ENCODE measurements at regions of chr17 and their contacts with region 1.

Region 1: DNA sequence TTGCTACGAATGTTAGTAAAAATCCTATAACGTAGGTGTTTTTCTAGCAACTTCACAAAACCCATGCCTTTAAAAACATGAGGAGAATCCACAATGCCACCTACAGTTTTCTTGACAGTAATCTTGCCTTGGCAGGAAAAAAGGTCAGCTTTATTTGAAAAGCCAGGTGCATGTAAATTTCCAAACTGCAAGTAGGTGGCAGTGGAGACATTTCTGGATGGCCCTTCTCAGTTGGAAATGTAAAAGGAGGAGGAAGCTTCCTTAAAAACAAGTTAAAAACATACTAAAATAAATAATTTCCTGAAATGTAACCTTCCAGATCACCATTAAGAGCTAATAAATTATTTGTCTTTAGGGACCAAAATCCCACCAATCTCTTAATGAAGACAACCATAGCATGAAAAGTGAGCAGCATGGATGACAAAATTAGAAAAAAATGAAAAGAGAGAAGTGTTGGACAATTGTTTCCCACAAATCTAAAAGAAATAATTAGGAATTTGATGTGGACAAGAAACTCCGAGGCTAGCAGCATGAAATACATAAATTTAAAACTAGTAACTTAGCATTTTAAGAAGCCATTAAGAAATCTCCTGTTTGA is 152.2 kb downstream of the SNX11 start:
- DNase-seq: peak; percentile 35 to 87
- ATAC-seq: peak; percentile 52 to 59; a peak in 4 of 6 replicates
- H3K4me3 ChIP-seq: no peak overlapping the region
- H3K27ac ChIP-seq: peak overlapping the region in 1 of 2 experiments; percentile 35; a peak in 1 of 6 replicates
- H3K4me1 ChIP-seq: peaks cover 61% of the 10 kb centered on the region
- CTCF ChIP-seq: peak; percentile 99
- EP300 ChIP-seq: no peak
- POLR2A ChIP-seq: no peak
- RAD21 ChIP-seq: peak; percentile 93

Region 2: GRCh38 chr17:48101012-48101720 is 158.6 kb before region 1 on chr17 and contains the start of gene CBX1:
- CTCF ChIA-PET with region 1: no interaction called
- POLR2A ChIA-PET with region 1: no interaction called
- DNase-seq: peak; percentile 92 to 99
- ATAC-seq: peak; percentile 93 to 97
- H3K4me3 ChIP-seq: peak within 1 kb of the TSS; percentile 76
- H3K27ac ChIP-seq: peak within 1 kb of the TSS; percentile 89 to 90
- H3K4me1 ChIP-seq: peaks cover 20% of the 10 kb centered on the region
- CTCF ChIP-seq: no peak
- EP300 ChIP-seq: no peak
- POLR2A ChIP-seq: peak; percentile 68
- RAD21 ChIP-seq: no peak
- polyA plus RNA-seq, gene CBX1: 69.6 and 84.4 TPM in 2 replicates

Region 3: DNA sequence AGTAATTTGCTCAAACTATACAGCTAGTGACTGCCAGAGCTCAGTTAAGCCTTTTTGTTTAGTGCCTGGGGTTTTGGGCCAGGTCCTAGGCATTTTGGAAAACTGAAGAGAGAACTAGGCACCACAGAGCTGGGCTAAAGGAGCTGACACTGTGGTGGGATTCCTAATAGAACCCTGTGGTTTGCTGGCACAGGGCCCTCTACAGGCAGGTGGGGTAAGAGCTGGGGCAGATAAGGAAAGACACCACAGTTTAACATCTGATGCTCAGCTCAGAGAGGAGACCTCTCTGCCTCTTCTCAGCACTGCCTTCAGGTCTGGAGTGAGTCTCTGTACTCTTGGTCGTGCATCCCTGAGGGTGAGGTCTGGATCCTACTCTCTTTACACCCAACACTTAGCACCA is 31.1 kb before region 1 on chr17:
- CTCF ChIA-PET with region 1: interaction called, 23 read pairs
- POLR2A ChIA-PET with region 1: no interaction called
- DNase-seq: no peak
- ATAC-seq: peak; percentile 70 to 74; a peak in 5 of 6 replicates
- H3K4me3 ChIP-seq: no peak overlapping the region
- H3K27ac ChIP-seq: no peak overlapping the region
- H3K4me1 ChIP-seq: no peaks in the 10 kb centered on the region
- CTCF ChIP-seq: no peak
- EP300 ChIP-seq: no peak
- POLR2A ChIP-seq: no peak
- RAD21 ChIP-seq: no peak

Region 4: GRCh38 chr17:48270896-48271295 is 11.1 kb after region 1 on chr17:
- CTCF ChIA-PET with region 1: interaction called, 43 read pairs
- POLR2A ChIA-PET with region 1: no interaction called
- DNase-seq: no peak
- ATAC-seq: no peak
- H3K4me3 ChIP-seq: no peak overlapping the region
- H3K27ac ChIP-seq: no peak overlapping the region
- H3K4me1 ChIP-seq: peaks cover 17% of the 10 kb centered on the region
- CTCF ChIP-seq: no peak
- EP300 ChIP-seq: no peak
- POLR2A ChIP-seq: no peak
- RAD21 ChIP-seq: no peak

Region 5: GRCh38 chr17:48295362-48296288 is 35.8 kb after region 1 on chr17:
- CTCF ChIA-PET with region 1: interaction called, 15 read pairs
- POLR2A ChIA-PET with region 1: interaction called, 4 read pairs
- DNase-seq: peak in 1 of 2 experiments; percentile 35
- ATAC-seq: peak in 1 of 2 experiments; percentile 45; a peak in 1 of 6 replicates
- H3K4me3 ChIP-seq: no peak overlapping the region
- H3K27ac ChIP-seq: peak overlapping the region; percentile 8 to 34; a peak in 5 of 6 replicates
- H3K4me1 ChIP-seq: peaks cover 23% of the 10 kb centered on the region
- CTCF ChIP-seq: no peak
- EP300 ChIP-seq: no peak
- POLR2A ChIP-seq: no peak
- RAD21 ChIP-seq: no peak

Region 6: GRCh38 chr17:48335858-48336500 is 76.2 kb after region 1 on chr17:
- CTCF ChIA-PET with region 1: interaction called, 11 read pairs
- POLR2A ChIA-PET with region 1: no interaction called
- DNase-seq: peak; percentile 35 to 68
- ATAC-seq: peak; percentile 71 to 74; a peak in 5 of 6 replicates
- H3K4me3 ChIP-seq: no peak overlapping the region
- H3K27ac ChIP-seq: no peak overlapping the region
- H3K4me1 ChIP-seq: peaks cover 17% of the 10 kb centered on the region
- CTCF ChIP-seq: peak; percentile 94
- EP300 ChIP-seq: no peak
- POLR2A ChIP-seq: no peak
- RAD21 ChIP-seq: peak; percentile 75 to 79

Region 7: GRCh38 chr17:48593840-48594537 is 334.2 kb after region 1 on chr17:
- CTCF ChIA-PET with region 1: interaction called, 30 read pairs
- POLR2A ChIA-PET with region 1: no interaction called
- DNase-seq: peak; percentile 81 to 94
- ATAC-seq: peak; percentile 74 to 92
- H3K4me3 ChIP-seq: peak overlapping the region; percentile 22; the same call in 2 of the 3 replicates
- H3K27ac ChIP-seq: peak overlapping the region in 1 of 2 experiments; percentile 60; a peak in 4 of 6 replicates
- H3K4me1 ChIP-seq: peaks cover 5% of the 10 kb centered on the region
- CTCF ChIP-seq: peak; percentile 99
- EP300 ChIP-seq: no peak
- POLR2A ChIP-seq: no peak
- RAD21 ChIP-seq: peak; percentile 91 to 94

Region 8: GRCh38 chr17:48618256-48618897 is 358.6 kb after region 1 on chr17:
- CTCF ChIA-PET with region 1: interaction called, 21 read pairs
- POLR2A ChIA-PET with region 1: no interaction called
- DNase-seq: peak; percentile 86 to 97
- ATAC-seq: peak; percentile 74 to 78
- H3K4me3 ChIP-seq: no peak overlapping the region
- H3K27ac ChIP-seq: no peak overlapping the region
- H3K4me1 ChIP-seq: peaks cover 12% of the 10 kb centered on the region
- CTCF ChIP-seq: peak; percentile 99
- EP300 ChIP-seq: no peak
- POLR2A ChIP-seq: no peak
- RAD21 ChIP-seq: peak; percentile 97 to 99

Region 9: DNA sequence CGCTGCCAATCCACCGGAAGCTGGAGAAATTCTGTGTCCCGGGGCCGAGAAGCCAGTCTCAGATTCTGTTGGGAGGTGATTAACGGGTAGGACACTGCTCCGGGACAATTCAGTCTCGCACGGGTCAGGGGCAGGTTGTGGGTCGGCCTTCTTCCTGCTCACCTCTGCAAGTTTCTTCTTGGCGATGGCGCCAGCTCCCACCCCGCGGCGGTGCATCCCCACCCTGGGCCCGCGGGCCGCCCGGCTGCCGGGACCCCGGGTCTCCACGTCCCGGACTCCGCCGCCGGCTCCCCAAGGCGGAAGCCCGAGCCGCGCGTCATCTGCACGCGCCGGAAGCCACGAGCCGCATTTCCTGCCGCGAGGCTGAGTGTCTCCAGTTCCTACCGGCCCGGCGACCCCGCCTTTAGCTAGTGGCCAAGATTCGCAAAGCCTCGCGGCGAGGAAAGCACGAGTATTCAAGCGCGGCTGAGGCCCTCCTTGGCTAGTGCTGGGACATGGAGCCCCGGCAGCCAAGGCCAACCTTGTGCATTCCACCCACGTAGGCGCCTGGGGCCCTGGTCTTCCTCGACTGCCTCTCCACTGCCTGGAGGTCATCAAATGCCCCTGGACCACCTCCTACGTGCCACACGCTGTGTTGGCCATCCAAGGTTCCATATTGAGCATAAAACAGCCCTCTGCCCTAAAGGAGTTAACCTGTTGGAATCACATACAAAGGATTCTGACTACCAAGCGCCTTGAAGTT is 684.9 kb after region 1 on chr17 and contains the start of gene SNF8:
- CTCF ChIA-PET with region 1: no interaction called
- POLR2A ChIA-PET with region 1: no interaction called
- DNase-seq: peak; percentile 95 to 99
- ATAC-seq: peak; percentile 95 to 98
- H3K4me3 ChIP-seq: peak within 1 kb of the TSS; percentile 60
- H3K27ac ChIP-seq: peak within 1 kb of the TSS; percentile 86 to 92
- H3K4me1 ChIP-seq: peaks cover 19% of the 10 kb centered on the region; the same call in 2 of the 3 replicates
- CTCF ChIP-seq: no peak
- EP300 ChIP-seq: no peak
- POLR2A ChIP-seq: peak; percentile 72
- RAD21 ChIP-seq: peak in 1 of 2 experiments; percentile 50; a peak in 4 of 5 replicates
- polyA plus RNA-seq, gene SNF8: 187 and 209 TPM in 2 replicates

Measured in A549 (cell line).